MCF 10A (cell line): ENCODE measurements at regions of chr7 and their contacts with region 1.

Region 1: DNA sequence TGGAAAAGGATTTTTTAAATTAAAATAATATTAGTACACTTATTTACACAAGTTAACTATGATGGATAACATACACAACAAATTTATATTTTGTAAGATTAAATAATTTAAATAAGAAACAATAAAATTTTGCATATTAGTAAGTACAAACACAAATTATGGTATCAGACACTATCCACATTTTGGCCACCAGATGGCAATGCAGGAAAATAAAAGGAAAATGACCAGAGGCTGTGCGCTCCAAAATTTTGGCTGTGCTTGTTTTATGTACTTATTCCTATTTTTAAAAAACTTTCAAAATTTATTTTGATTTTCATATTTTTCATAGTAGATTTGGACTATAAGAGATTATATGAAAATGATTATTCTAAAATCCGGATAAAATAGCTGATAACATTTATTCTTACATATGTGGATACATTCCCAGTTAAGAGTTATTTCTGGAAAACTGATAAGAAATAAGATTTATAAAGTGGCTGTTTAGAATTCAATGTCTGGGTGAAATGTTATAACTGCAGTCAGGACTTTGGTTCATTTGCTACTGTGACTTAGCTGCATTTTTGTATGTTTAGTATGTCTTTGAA is 274.7 kb upstream of the HGF start:
- DNase-seq: peak; percentile 54
- H3K4me3 Mint-ChIP-seq: no peak overlapping the region
- H3K27ac Mint-ChIP-seq: no peak overlapping the region
- H3K4me1 Mint-ChIP-seq: no peaks in the 10 kb centered on the region
- H3K27me3 Mint-ChIP-seq: peaks cover 73% of the 10 kb centered on the region
- CTCF ChIP-seq: peak; percentile 66

Region 2: GRCh38 chr7:82071468-82071867 is 26.9 kb after region 1 on chr7:
- CTCF ChIA-PET with region 1: no interaction called
- POLR2A ChIA-PET with region 1: no interaction called
- intact Hi-C with region 1: no loop called
- DNase-seq: no peak
- H3K4me3 Mint-ChIP-seq: no peak overlapping the region
- H3K27ac Mint-ChIP-seq: no peak overlapping the region
- H3K4me1 Mint-ChIP-seq: no peaks in the 10 kb centered on the region
- H3K27me3 Mint-ChIP-seq: peaks cover 92% of the 10 kb centered on the region
- CTCF ChIP-seq: no peak

Region 3: DNA sequence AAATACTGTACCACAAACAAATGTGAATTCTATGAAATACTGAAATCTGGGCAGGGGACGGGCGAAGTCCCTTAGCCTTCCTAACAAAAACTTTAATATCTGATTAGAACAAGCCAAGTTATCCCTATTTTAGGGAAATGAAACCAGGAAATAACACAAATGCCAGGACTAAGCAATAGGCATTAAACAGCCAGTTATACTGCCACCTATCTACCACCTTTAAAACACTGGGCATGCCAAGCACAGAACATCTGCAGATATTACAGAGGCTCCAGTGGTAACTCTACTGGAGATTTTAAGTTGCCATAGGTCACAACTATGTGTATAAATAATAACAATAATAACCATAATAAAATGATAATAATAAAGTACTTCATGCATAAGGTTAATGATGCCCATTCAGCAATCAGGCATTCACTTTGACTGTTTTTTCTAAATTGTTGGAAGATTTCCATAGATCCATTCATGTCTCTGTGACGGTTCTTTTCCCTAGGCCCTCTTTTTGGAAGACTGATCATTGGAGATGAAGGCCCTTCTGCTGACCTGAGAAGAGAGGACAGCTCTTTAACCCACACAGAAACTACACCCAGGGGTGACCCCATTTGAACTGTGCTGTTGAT is 203.3 kb after region 1 on chr7:
- CTCF ChIA-PET with region 1: interaction called, 3 read pairs
- POLR2A ChIA-PET with region 1: no interaction called
- intact Hi-C with region 1: loop called (anchors 10 kb)
- DNase-seq: peak; percentile 30
- H3K4me3 Mint-ChIP-seq: no peak overlapping the region
- H3K27ac Mint-ChIP-seq: no peak overlapping the region
- H3K4me1 Mint-ChIP-seq: no peaks in the 10 kb centered on the region
- H3K27me3 Mint-ChIP-seq: peaks cover 76% of the 10 kb centered on the region
- CTCF ChIP-seq: peak; percentile 39

Region 4: GRCh38 chr7:82481499-82482097 is 437.0 kb after region 1 on chr7:
- CTCF ChIA-PET with region 1: interaction called, 5 read pairs
- POLR2A ChIA-PET with region 1: no interaction called
- intact Hi-C with region 1: loop called (anchors 10 kb)
- DNase-seq: peak; percentile 26
- H3K4me3 Mint-ChIP-seq: no peak overlapping the region
- H3K27ac Mint-ChIP-seq: no peak overlapping the region
- H3K4me1 Mint-ChIP-seq: no peaks in the 10 kb centered on the region
- H3K27me3 Mint-ChIP-seq: peaks cover 20% of the 10 kb centered on the region
- CTCF ChIP-seq: peak; percentile 59

Region 5: DNA sequence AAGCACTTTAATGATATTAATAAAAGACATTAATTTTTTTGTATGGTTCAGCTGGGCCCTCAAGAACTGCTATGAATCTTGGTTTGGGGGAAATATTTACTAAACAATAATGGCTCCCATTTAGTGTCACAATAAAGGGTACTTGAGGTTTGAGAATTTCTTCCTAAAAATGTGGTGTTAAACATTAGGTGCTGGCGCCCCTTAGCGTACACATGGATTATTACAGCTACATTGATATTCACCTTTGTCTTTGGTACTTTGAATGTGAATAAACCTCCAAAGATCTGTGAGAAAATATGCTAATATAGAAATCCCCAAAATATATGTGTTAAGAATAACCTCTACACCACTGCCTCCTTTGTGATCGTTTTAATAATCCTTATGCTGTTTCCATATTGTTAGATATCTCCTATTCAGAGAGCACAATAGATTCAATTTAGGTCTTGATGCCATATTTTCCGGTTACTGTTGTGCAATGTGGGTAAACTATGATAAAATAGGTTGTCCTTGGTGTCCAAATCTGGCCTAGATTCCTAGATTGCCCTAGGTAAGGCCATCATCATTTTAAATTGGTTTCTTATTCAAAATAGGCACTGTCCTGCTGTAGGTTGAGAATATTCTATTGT is 560.8 kb after region 1 on chr7:
- CTCF ChIA-PET with region 1: interaction called, 5 read pairs
- POLR2A ChIA-PET with region 1: no interaction called
- intact Hi-C with region 1: loop called (anchors 2 kb)
- DNase-seq: peak; percentile 48
- H3K4me3 Mint-ChIP-seq: no peak overlapping the region
- H3K27ac Mint-ChIP-seq: no peak overlapping the region
- H3K4me1 Mint-ChIP-seq: no peaks in the 10 kb centered on the region
- H3K27me3 Mint-ChIP-seq: peaks cover 28% of the 10 kb centered on the region
- CTCF ChIP-seq: peak; percentile 54